ENCODE measurements at regions of chr5 and their contacts with region 1.

Region 1: GRCh38 chr5:170225326-170226128 is 7.3 kb upstream of the C5orf58 start:
- DNase-seq: peak in 1 of 2 experiments; percentile 84
- H3K4me3 ChIP-seq: no peak overlapping the region
- H3K27ac ChIP-seq: no peak overlapping the region
- H3K4me1 ChIP-seq: peaks cover 0 to 7% (median 2%) of the 10 kb centered on the region in 4 experiments; a peak in 4 of 7 replicates
- H3K27me3 ChIP-seq: peaks cover 0 to under 1% (median under 1%) of the 10 kb centered on the region in 4 experiments; a peak in 2 of 7 replicates
- CTCF ChIP-seq: peak; percentile 29 to 85 (median 65)
- EP300 ChIP-seq: no peak
- POLR2A ChIP-seq: no peak
- RAD21 ChIP-seq: peak; percentile 95 to 96

Region 2: GRCh38 chr5:169850409-169850808 is 375.1 kb before region 1 on chr5:
- CTCF ChIA-PET with region 1: no interaction called
- POLR2A ChIA-PET with region 1: no interaction called
- DNase-seq: no peak
- H3K4me3 ChIP-seq: no peak overlapping the region
- H3K27ac ChIP-seq: no peak overlapping the region
- H3K4me1 ChIP-seq: no peaks in the 10 kb centered on the region
- H3K27me3 ChIP-seq: no peaks in the 10 kb centered on the region
- CTCF ChIP-seq: peak in 2 of 3 experiments; percentile 36 to 38; a peak in 3 of 4 replicates
- EP300 ChIP-seq: no peak
- POLR2A ChIP-seq: no peak
- RAD21 ChIP-seq: peak; percentile 58

Region 3: DNA sequence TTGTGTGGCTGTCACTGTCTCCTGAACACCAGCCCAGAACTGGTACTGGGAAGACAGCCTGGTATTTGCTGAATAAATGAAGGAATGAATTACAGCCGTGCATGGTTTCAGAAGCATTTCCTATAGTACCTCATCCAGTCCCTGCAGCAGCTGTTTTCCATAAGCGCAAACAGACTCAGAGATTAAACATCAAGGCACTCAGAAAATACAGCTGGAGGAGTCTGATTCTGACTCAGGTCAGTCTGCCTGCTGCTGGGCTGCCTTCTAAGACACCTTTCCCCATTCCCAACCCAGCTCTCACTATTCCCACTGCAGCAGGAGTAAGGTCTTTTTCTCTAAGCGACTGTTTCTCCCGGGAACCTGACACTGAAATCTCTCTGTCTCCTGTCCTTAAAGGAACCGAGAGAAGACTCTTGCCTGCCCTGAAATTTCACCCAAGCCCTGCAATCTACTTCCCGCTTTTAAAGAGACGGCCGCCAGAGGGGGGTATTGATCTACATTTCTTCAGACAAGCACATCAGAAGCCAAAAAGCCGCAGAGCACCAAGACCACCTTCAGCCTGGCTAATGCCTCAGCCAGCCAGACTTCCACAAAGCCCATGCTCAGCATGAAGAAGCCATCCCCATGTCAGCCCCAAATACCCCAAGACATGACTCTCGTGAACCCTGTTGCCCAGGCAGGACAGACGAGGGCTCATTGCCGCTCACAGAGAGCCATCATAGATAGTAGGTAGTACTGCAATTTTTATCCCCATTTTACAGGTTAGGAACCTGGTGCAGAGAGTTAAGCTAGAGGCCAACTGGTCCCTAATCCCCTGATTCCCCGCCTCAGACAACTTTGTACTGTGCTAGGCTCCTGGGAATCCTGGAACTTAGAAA is 125.2 kb before region 1 on chr5:
- CTCF ChIA-PET with region 1: interaction called, 29 read pairs
- POLR2A ChIA-PET with region 1: no interaction called
- DNase-seq: peak; percentile 80 to 93
- H3K4me3 ChIP-seq: no peak overlapping the region
- H3K27ac ChIP-seq: no peak overlapping the region
- H3K4me1 ChIP-seq: peaks cover 0 to 2% (median 0%) of the 10 kb centered on the region in 4 experiments; a peak in 1 of 7 replicates
- H3K27me3 ChIP-seq: 0 out of 7 replicates have a peak, but pooled peaks cover 0 to 7% (median 0%) of the 10 kb centered on the region in 4 experiments
- CTCF ChIP-seq: peak; percentile 11 to 93 (median 68)
- EP300 ChIP-seq: no peak
- POLR2A ChIP-seq: no peak
- RAD21 ChIP-seq: peak; percentile 94 to 98

Region 4: DNA sequence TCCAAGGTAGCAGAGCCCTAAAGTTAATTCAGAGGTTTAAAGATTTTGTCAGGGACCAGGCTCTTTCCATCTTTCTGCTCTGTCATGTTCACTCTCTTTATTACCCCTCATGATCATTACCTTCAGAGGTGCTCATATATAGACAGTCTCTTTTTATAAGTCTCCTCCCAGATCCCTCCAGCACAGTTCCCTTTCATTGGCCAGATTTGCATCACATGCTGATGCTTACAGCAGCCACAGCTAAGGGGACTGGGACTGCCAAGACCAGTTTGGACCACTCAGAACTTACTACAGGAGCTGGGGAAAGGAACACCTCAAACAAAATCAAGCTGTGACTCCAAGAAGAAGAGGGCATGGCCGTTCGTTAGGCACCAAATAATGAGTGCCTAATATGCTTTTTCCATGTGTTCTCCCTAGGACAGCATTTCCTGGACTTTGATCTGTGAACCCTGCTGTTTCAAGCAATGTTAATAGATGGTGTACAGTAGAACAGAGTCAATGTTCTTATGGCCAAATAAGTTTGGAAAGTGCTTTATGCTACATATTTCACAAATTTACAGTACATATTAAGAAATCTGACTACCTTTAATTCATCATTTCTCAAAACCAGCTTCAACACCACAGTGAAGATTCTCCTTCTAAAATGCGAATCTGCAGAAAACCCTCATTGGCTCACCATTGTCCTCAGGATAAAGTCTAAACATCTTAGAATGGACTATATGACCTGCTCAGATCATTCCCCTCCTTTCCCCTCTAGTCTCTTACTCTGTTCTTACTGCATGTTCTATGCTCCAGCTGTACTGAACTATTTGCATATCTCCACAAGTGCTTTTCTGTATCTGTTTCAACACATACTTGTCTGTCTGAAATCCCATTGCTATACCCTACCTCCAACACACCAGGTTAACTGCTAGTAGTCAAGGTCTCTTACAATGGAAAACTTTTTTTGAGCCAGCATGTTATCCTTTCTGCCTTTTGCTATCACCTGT is 10.6 kb after region 1 on chr5:
- CTCF ChIA-PET with region 1: interaction called, 31 read pairs
- POLR2A ChIA-PET with region 1: no interaction called
- DNase-seq: no peak
- H3K4me3 ChIP-seq: no peak overlapping the region
- H3K27ac ChIP-seq: no peak overlapping the region
- H3K4me1 ChIP-seq: no peaks in the 10 kb centered on the region
- H3K27me3 ChIP-seq: no peaks in the 10 kb centered on the region
- CTCF ChIP-seq: no peak
- EP300 ChIP-seq: no peak
- POLR2A ChIP-seq: no peak
- RAD21 ChIP-seq: no peak

Region 5: GRCh38 chr5:170267431-170268152 is 42.1 kb after region 1 on chr5:
- CTCF ChIA-PET with region 1: interaction called, 78 read pairs
- POLR2A ChIA-PET with region 1: no interaction called
- DNase-seq: peak in 1 of 2 experiments; percentile 83
- H3K4me3 ChIP-seq: no peak overlapping the region
- H3K27ac ChIP-seq: no peak overlapping the region
- H3K4me1 ChIP-seq: peaks cover 6 to 11% (median 8%) of the 10 kb centered on the region in 4 experiments; a peak in 4 of 7 replicates
- H3K27me3 ChIP-seq: no peaks in the 10 kb centered on the region; a peak in 1 of 7 replicates
- CTCF ChIP-seq: peak; percentile 85 to 93 (median 89)
- EP300 ChIP-seq: no peak
- POLR2A ChIP-seq: no peak
- RAD21 ChIP-seq: peak; percentile 74 to 80

Region 6: GRCh38 chr5:170348137-170348633 is 122.7 kb after region 1 on chr5:
- CTCF ChIA-PET with region 1: interaction called, 70 read pairs
- POLR2A ChIA-PET with region 1: no interaction called
- DNase-seq: no peak
- H3K4me3 ChIP-seq: no peak overlapping the region
- H3K27ac ChIP-seq: no peak overlapping the region
- H3K4me1 ChIP-seq: peaks cover 9 to 13% (median 10%) of the 10 kb centered on the region in 4 experiments; a peak in 6 of 7 replicates
- H3K27me3 ChIP-seq: peaks cover 0 to 4% (median 1%) of the 10 kb centered on the region in 4 experiments; a peak in 5 of 7 replicates
- CTCF ChIP-seq: peak in 2 of 3 experiments; percentile 27 to 28; a peak in 2 of 4 replicates
- EP300 ChIP-seq: no peak
- POLR2A ChIP-seq: no peak
- RAD21 ChIP-seq: peak; percentile 57 to 68

Region 7: GRCh38 chr5:170404402-170404801 is 178.9 kb after region 1 on chr5:
- CTCF ChIA-PET with region 1: interaction called, 93 read pairs
- POLR2A ChIA-PET with region 1: no interaction called
- DNase-seq: no peak
- H3K4me3 ChIP-seq: no peak overlapping the region
- H3K27ac ChIP-seq: no peak overlapping the region
- H3K4me1 ChIP-seq: peaks cover 9 to 15% (median 13%) of the 10 kb centered on the region in 4 experiments; a peak in 6 of 7 replicates
- H3K27me3 ChIP-seq: no peaks in the 10 kb centered on the region
- CTCF ChIP-seq: no peak
- EP300 ChIP-seq: no peak
- POLR2A ChIP-seq: no peak
- RAD21 ChIP-seq: no peak

Region 8: DNA sequence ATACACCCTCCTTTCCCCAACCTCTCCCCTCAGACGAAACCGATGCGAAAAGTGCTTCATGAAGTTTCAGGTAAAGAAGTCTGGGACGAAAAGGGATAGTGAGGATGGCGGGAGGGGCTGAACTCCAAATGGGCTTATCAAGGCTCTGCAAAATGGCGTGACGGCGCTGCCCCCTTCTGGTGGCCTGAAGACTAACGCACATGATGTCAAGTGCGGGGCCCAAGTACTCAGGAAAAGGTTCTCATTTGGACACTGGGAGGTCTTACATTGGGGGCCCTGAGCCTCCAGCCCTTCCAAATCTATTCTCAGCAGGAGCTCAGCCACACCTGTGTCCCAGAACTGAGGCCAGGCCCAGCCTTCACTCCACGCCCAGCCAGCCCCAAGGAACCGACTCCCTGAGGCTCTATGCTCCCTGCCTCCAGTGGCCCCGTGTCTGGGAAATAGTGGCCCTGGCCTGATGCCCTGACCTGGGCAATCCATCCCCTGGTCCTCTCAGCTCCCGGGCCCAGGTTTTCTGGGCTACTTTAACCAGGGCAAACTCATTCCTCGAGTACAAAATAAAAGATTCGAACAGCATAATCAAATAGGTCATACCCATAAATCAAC is 398.2 kb after region 1 on chr5:
- CTCF ChIA-PET with region 1: interaction called, 12 read pairs
- POLR2A ChIA-PET with region 1: no interaction called
- DNase-seq: peak in 1 of 2 experiments; percentile 79
- H3K4me3 ChIP-seq: no peak overlapping the region
- H3K27ac ChIP-seq: no peak overlapping the region
- H3K4me1 ChIP-seq: peaks cover 0 to 10% (median 3%) of the 10 kb centered on the region in 4 experiments; a peak in 6 of 7 replicates
- H3K27me3 ChIP-seq: no peaks in the 10 kb centered on the region; a peak in 2 of 7 replicates
- CTCF ChIP-seq: peak in 2 of 3 experiments; percentile 93; a peak in 3 of 4 replicates
- EP300 ChIP-seq: no peak
- POLR2A ChIP-seq: no peak
- RAD21 ChIP-seq: peak; percentile 96 to 98